CD4-positive, alpha-beta memory T cell (primary cell): ENCODE measurements at regions of chr2 and their contacts with region 1.

Region 1: GRCh38 chr2:60152226-60152833 is 401.1 kb downstream of the BCL11A start:
- DNase-seq: peak in 1 of 5 donors; percentile 2
- H3K4me3 ChIP-seq: no peak overlapping the region
- H3K4me3 Mint-ChIP-seq: no peak overlapping the region
- H3K27ac ChIP-seq: no peak overlapping the region
- H3K27ac Mint-ChIP-seq: no peak overlapping the region
- H3K4me1 ChIP-seq: no peaks in the 10 kb centered on the region
- H3K4me1 Mint-ChIP-seq: no peaks in the 10 kb centered on the region
- H3K27me3 ChIP-seq: no peaks in the 10 kb centered on the region
- H3K27me3 Mint-ChIP-seq: no peaks in the 10 kb centered on the region

Region 2: DNA sequence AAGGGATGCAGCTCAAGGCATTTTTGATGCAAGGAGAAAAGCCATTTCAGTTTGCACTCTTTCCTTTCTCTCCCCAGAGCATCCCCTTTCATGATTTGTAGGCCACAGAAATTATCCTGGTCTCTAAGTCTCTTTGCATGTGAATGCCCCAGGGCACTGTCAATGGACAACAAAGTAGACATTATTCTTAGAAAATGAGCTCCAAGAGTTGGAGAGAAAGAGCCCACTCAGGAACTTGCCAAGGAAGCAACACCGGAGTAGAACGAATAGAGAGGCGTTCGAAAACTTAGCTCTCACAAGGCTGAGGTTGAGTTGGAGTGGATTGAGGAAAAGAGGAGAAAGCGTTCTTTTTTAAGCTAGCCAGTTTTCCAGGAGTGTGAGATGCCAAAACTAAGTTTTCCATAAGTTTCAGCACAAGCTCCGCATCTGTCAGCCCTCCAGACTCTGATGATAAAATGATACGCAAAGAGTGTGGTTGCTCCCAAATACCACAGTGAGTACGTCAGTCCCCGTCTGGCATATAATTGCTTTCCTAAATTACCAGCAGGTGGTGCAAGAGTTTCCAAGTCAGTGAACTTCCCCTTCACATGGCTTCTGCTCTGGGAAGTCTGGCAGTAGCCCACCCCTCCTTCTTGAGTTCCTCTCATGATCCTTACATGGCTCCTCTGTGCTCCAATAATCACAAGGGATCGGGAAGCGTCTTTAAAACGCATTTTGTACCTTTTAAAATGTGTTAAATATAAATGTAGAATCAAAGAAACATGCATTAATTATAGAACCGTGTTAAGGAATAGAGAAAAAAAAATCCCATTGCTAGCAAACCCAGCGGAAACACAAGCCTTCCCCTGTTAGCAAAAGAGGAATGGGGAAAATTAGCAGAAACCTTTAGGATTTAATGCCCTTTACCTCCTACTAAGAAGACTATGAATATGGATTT is 850.6 kb before region 1 on chr2:
- CTCF ChIA-PET with region 1: interaction called, 3 read pairs
- POLR2A ChIA-PET with region 1: no interaction called
- intact Hi-C with region 1: loop called (anchors 5 kb)
- DNase-seq: peak in 2 of 5 donors; percentile 4 to 8
- H3K4me3 ChIP-seq: no peak overlapping the region
- H3K4me3 Mint-ChIP-seq: no peak overlapping the region
- H3K27ac ChIP-seq: no peak overlapping the region
- H3K27ac Mint-ChIP-seq: no peak overlapping the region
- H3K4me1 ChIP-seq: no peaks in the 10 kb centered on the region
- H3K4me1 Mint-ChIP-seq: no peaks in the 10 kb centered on the region
- H3K27me3 ChIP-seq: no peaks in the 10 kb centered on the region
- H3K27me3 Mint-ChIP-seq: no peaks in the 10 kb centered on the region

Region 3: GRCh38 chr2:59398081-59398480 is 754.2 kb before region 1 on chr2:
- CTCF ChIA-PET with region 1: no interaction called
- POLR2A ChIA-PET with region 1: no interaction called
- intact Hi-C with region 1: no loop called
- DNase-seq: no peak
- H3K4me3 ChIP-seq: no peak overlapping the region
- H3K4me3 Mint-ChIP-seq: no peak overlapping the region
- H3K27ac ChIP-seq: no peak overlapping the region
- H3K27ac Mint-ChIP-seq: no peak overlapping the region
- H3K4me1 ChIP-seq: no peaks in the 10 kb centered on the region
- H3K4me1 Mint-ChIP-seq: no peaks in the 10 kb centered on the region
- H3K27me3 ChIP-seq: no peaks in the 10 kb centered on the region
- H3K27me3 Mint-ChIP-seq: no peaks in the 10 kb centered on the region

Region 4: GRCh38 chr2:61688378-61689334 is 1536.3 kb after region 1 on chr2:
- CTCF ChIA-PET with region 1: no interaction called
- POLR2A ChIA-PET with region 1: no interaction called
- intact Hi-C with region 1: no loop called
- DNase-seq: peak in 1 of 5 donors; percentile 33
- H3K4me3 ChIP-seq: no peak overlapping the region
- H3K4me3 Mint-ChIP-seq: no peak overlapping the region
- H3K27ac ChIP-seq: no peak overlapping the region
- H3K27ac Mint-ChIP-seq: no peak overlapping the region
- H3K4me1 ChIP-seq: no peaks in the 10 kb centered on the region
- H3K4me1 Mint-ChIP-seq: peaks cover 0 to 4% (median 2%) of the 10 kb centered on the region in 4 donors
- H3K27me3 ChIP-seq: no peaks in the 10 kb centered on the region
- H3K27me3 Mint-ChIP-seq: peaks cover 3 to 4% of the 10 kb centered on the region in 2 donors